CD4-positive, alpha-beta memory T cell (primary cell): ENCODE measurements at regions of chr5 and their contacts with region 1.

Region 1: GRCh38 chr5:113311301-113311700 is 123.5 kb downstream of the TSSK1B start:
- DNase-seq: no peak
- H3K4me3 ChIP-seq: no peak overlapping the region
- H3K4me3 Mint-ChIP-seq: no peak overlapping the region
- H3K27ac ChIP-seq: no peak overlapping the region
- H3K27ac Mint-ChIP-seq: no peak overlapping the region
- H3K4me1 ChIP-seq: no peaks in the 10 kb centered on the region
- H3K4me1 Mint-ChIP-seq: no peaks in the 10 kb centered on the region
- H3K27me3 ChIP-seq: no peaks in the 10 kb centered on the region
- H3K27me3 Mint-ChIP-seq: peaks cover 7% of the 10 kb centered on the region in 2 donors

Region 2: GRCh38 chr5:112208699-112209615 is 1102.3 kb before region 1 on chr5:
- CTCF ChIA-PET with region 1: no interaction called
- POLR2A ChIA-PET with region 1: no interaction called
- intact Hi-C with region 1: loop called (anchors 10 kb)
- DNase-seq: no peak
- H3K4me3 ChIP-seq: no peak overlapping the region
- H3K4me3 Mint-ChIP-seq: no peak overlapping the region
- H3K27ac ChIP-seq: no peak overlapping the region
- H3K27ac Mint-ChIP-seq: no peak overlapping the region
- H3K4me1 ChIP-seq: no peaks in the 10 kb centered on the region
- H3K4me1 Mint-ChIP-seq: no peaks in the 10 kb centered on the region
- H3K27me3 ChIP-seq: no peaks in the 10 kb centered on the region
- H3K27me3 Mint-ChIP-seq: peaks cover 13 to 18% of the 10 kb centered on the region in 2 donors